Breast epithelium (tissue), 4 donors: ENCODE measurements at regions of chr21 and their contacts with region 1.

Region 1: DNA sequence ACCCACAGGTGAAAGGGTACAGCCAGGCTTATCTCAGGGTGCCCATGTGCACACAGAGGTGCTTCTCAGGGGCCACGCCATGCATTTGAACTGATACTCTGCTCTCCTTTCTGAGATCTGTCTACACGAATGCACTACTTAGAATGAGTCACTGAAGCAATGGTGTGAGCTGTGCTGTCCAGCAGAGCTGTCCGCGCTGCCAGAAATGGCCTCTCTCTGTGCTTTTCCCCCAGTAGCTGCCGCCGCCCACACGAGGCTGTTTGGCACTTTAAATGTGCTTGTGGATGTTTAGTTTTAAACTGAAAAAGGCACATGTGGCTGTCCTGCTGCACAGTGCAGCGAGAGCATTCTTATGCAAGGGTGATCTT is 87.1 kb upstream of the COL6A1 start:
- DNase-seq: no peak
- H3K4me3 ChIP-seq: no peak overlapping the region
- H3K27ac ChIP-seq: no peak overlapping the region
- H3K4me1 ChIP-seq: peaks cover 0 to 5% of the 10 kb centered on the region in 2 donors
- H3K27me3 ChIP-seq: peaks cover 0 to 18% of the 10 kb centered on the region in 2 donors
- CTCF ChIP-seq: no peak
- POLR2A ChIP-seq: no peak

Region 2: GRCh38 chr21:44344541-44345328 is 1549.7 kb before region 1 on chr21:
- intact Hi-C with region 1: loop called (anchors 5 kb)
- DNase-seq: no peak
- H3K4me3 ChIP-seq: no peak overlapping the region
- H3K27ac ChIP-seq: no peak overlapping the region
- H3K4me1 ChIP-seq: no peaks in the 10 kb centered on the region
- H3K27me3 ChIP-seq: peaks cover 0 to 14% of the 10 kb centered on the region in 2 donors
- CTCF ChIP-seq: no peak
- POLR2A ChIP-seq: no peak

Region 3: GRCh38 chr21:44425307-44425894 is 1469.0 kb before region 1 on chr21:
- intact Hi-C with region 1: no loop called
- DNase-seq: peak in 1 of 2 donors; percentile 51
- H3K4me3 ChIP-seq: peak overlapping the region in 2 of 3 donors; percentile 40 to 60
- H3K27ac ChIP-seq: peak overlapping the region in 1 of 2 donors; percentile 61
- H3K4me1 ChIP-seq: no peaks in the 10 kb centered on the region
- H3K27me3 ChIP-seq: peaks cover 0 to 33% of the 10 kb centered on the region in 2 donors
- CTCF ChIP-seq: no peak
- POLR2A ChIP-seq: no peak

Region 4: GRCh38 chr21:45950734-45951515 is 56.5 kb after region 1 on chr21:
- intact Hi-C with region 1: loop called (anchors 10 kb)
- DNase-seq: peak in 1 of 2 donors; percentile 67
- H3K4me3 ChIP-seq: peak overlapping the region in 2 of 3 donors; percentile 35 to 60
- H3K27ac ChIP-seq: peak overlapping the region; percentile 48 to 91
- H3K4me1 ChIP-seq: peaks cover 3 to 12% of the 10 kb centered on the region in 2 donors
- H3K27me3 ChIP-seq: peaks cover 0 to 5% of the 10 kb centered on the region in 2 donors
- CTCF ChIP-seq: no peak
- POLR2A ChIP-seq: no peak